ENCODE measurements at regions of chr9 and their contacts with region 1.

Region 1: DNA sequence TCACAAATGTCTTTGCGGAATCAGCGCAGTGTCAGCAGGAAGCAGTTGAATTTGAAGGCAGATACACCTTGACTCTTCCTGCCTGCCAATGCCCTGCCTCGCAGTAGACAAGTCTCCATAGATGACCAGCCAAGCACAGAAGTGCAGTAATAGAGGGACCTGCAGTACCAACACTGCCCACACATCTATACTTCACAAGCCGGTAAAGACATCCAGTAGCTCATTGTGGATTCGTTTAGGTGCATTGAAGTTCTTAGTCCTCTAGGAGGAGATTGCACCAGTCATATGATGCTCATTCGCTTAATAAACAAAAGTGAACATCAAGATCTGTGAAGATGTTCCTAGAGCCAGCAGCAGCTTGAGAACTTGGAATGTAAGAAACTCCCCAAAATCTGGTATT is 7.1 kb upstream of the IFNA2 start:
- DNase-seq: no peak
- ATAC-seq: peak; percentile 39 to 71 (median 59)
- H3K4me3 ChIP-seq: no peak overlapping the region
- H3K27ac ChIP-seq: no peak overlapping the region
- H3K4me1 ChIP-seq: no peaks in the 10 kb centered on the region
- H3K27me3 ChIP-seq: peaks cover 6 to 19% of the 10 kb centered on the region in 2 donors
- CTCF ChIP-seq: peak in 3 of 4 donors; percentile 15 to 23 (median 21)
- POLR2A ChIP-seq: no peak

Region 2: GRCh38 chr9:20972684-20973083 is 419.6 kb before region 1 on chr9:
- intact Hi-C with region 1: no loop called
- DNase-seq: no peak
- ATAC-seq: no peak
- H3K4me3 ChIP-seq: no peak overlapping the region
- H3K27ac ChIP-seq: no peak overlapping the region
- H3K4me1 ChIP-seq: no peaks in the 10 kb centered on the region
- H3K27me3 ChIP-seq: no peaks in the 10 kb centered on the region
- CTCF ChIP-seq: no peak
- POLR2A ChIP-seq: no peak

Region 3: GRCh38 chr9:21324047-21324446 is 68.2 kb before region 1 on chr9:
- intact Hi-C with region 1: loop called in 1 of 2 experiments (anchors 5 kb)
- DNase-seq: no peak
- ATAC-seq: peak in 1 of 4 donors; percentile 42
- H3K4me3 ChIP-seq: no peak overlapping the region
- H3K27ac ChIP-seq: no peak overlapping the region
- H3K4me1 ChIP-seq: peaks cover 0 to 12% (median 0%) of the 10 kb centered on the region in 4 donors
- H3K27me3 ChIP-seq: no peaks in the 10 kb centered on the region
- CTCF ChIP-seq: no peak
- POLR2A ChIP-seq: no peak